Sciatic nerve (tissue), 2 donors: ENCODE measurements at regions of chr6 and their contacts with region 1.

Region 1: DNA sequence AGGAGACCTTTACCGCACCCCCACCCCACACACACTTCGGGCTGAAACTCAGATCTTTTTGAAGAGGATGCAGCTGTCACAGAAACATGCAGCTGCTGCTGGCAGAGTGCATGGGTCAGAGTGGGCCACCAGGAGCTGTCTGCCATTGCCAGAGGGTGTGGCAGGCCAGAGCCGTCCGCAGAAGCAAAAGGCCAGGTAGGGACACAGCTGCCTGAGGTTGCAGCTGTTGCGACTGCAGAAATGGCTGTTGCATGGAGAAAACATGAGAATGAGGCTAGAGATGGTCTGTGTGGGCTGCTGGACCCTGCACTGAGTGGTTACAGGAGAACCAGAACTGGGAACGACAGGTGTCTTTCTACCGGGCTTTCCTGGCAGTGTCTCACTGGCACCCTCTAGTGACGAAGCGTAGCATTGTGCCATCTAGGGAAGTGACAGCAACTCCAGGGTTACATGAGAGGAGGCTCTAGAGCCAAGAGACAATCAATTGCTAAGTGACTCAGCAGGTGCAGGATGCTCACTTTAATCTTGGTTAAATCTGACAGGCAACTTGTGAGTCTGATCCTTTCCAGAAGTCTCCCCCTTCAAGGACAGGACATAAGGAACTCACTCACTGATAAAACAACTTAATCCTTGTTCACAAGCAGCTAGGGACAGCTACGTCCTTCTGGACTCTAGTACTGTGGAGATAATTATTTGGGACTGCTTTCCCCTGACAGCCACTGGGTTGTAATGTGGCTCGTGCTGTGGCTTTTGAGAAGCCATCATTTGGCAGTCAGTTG is 29.1 kb upstream of the SERPINB9 start:
- DNase-seq: peak; percentile 86
- ATAC-seq: peak; percentile 91

Region 2: DNA sequence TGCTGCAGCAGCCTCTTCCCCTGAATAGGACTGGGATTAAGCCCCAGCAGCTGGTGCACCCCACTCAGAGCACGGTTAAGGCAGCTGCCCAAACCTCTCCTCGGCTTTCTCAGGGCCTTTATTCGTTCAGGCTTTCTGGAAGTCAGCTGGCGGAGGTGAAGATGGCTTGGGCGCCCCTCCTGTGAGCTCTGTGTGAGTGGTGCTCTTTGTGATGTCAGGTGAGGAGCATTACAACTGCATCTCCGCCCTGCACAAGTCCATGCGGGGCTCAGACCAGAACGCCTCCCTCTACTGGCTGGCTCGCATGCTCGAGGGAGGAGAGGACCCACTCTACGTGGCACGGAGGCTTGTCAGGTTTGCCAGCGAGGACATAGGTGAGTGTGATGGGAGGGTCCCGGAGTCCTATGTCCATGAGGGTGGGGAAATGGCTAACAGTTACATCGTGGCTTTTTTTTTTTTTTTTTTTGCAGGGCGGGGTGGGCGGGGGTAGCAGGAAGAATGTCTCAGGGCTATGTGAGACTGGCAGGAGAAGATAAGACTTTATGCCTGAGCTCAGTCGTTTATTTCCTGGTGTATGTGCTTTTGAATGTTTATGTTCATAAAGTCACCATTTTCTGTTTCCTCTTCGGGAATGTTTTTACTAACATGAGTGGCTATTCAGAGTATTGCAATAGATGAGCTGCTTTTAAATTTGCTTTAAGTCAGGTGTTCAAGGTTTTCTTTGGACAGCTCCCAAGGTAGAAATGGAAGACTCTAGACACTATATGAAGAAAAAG is 148.8 kb before region 1 on chr6:
- intact Hi-C with region 1: loop called (anchors 10 kb)
- DNase-seq: no peak
- ATAC-seq: peak; percentile 38

Region 3: GRCh38 chr6:2848851-2849250 is 83.3 kb before region 1 on chr6:
- intact Hi-C with region 1: loop called (anchors 5 kb)
- DNase-seq: no peak
- ATAC-seq: no peak

Region 4: DNA sequence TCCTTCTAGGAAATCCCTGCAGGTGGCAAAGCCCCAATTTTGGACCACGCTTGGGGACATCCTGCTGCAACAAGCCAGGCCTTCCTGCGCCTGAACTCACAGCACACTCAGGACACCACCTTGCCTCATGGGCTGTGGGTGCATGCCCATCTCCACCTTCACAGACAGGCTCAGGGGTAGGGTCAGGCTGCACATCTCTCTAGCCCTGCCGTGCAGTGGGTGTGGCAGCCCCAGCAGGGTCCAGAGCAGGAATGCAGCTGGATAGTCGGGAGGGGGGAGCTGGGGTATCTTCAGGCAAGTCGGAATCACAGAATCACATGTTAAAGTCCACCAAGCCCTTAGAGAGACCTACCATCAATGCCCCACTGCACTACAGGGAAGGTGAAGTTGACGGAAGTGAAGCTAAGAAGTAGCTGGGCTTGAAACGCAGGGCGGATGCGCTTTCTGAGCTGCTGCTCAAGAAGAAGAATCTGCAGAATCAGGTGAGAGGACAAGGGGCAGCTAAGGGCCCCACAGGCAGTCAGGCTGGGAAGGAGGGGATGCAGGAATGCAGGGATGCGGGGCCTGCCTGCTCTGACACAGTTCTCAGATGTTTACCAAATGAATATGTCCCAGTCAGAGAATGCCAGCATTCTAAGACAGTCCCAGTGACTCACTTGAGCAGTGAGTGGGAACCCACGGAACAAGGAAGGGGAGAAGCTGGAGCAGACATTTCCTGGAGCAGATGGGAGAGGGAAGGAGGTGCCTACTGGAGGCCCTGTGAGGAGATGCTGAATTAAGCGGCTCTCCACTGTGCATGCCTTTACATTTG is 28.0 kb after region 1 on chr6:
- intact Hi-C with region 1: no loop called
- DNase-seq: no peak
- ATAC-seq: peak; percentile 23